IMR-90 (cell line): ENCODE measurements at regions of chr13 and their contacts with region 1.

Region 1: DNA sequence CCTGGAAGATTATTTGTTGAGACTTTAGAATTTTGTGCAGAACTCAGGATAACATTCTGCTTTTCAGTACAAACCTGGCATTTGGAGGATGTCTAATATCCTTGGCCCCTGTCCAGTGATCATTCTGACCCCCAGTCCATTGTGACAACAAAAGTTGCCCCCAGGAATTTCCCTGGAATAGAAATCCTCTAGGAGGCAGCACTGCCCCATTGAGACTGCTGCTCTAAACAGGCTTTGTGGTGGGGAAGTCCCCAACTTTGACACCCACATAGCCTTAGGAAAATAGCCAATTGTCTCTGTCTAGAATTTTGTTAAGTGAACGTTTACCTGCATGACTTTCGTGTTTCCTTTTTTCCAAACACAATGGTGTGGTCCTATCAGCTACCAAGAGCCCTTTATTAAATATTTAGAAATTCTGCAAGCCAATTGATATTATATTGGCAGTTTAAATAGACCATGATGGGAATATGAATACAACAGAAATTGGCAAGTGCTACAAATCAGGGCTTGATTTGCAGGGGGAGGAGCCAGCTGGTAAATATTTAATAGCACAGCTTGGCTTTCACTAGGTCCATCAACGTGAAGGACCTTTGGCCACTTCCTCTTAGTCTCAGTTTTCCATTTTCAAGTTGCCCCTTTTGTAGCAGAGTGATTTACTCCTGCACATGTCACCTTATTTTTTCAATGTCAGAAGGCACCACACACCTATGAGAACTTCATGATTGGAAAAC is 451.7 kb downstream of the EFNB2 start:
- DNase-seq: peak; percentile 54
- ATAC-seq: peak; percentile 64
- H3K4me3 ChIP-seq: no peak overlapping the region
- H3K27ac ChIP-seq: no peak overlapping the region
- H3K4me1 ChIP-seq: no peaks in the 10 kb centered on the region
- H3K27me3 ChIP-seq: no peaks in the 10 kb centered on the region
- CTCF ChIP-seq: peak; percentile 74
- POLR2A ChIP-seq: no peak
- RAD21 ChIP-seq: peak; percentile 88

Region 2: DNA sequence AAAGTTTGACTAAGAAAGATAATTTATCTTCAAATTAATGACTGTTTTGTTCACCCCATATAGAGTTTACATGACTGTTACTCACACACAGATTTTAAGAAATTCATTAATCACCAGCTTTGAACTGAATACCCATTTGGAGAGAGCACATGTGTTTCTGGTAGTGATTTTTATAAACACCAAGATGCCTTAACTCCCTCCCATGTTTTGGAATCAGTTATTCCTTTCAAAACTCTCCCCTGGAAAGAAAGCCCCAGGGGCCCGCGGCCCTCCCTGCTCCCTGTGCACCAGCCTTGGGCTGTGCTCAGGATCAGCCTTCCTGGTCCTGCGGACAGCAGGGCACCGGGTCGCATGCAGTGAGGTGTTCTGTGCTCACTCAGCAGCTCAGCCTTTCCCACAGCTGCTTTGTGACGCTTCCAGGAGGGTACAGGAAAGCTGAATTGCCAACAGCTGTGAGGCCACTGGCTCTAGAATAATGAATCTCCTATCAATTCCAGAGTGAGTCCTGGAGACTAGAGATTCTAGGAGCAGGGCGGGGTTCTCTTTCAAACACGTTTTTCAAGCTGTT is 31.5 kb before region 1 on chr13:
- CTCF ChIA-PET with region 1: no interaction called
- POLR2A ChIA-PET with region 1: no interaction called
- dilution Hi-C with region 1: no loop called
- in situ Hi-C with region 1: no loop called
- intact Hi-C with region 1: no loop called
- DNase-seq: peak; percentile 48
- ATAC-seq: peak; percentile 75
- H3K4me3 ChIP-seq: no peak overlapping the region
- H3K27ac ChIP-seq: no peak overlapping the region
- H3K4me1 ChIP-seq: no peaks in the 10 kb centered on the region
- H3K27me3 ChIP-seq: no peaks in the 10 kb centered on the region
- CTCF ChIP-seq: no peak
- POLR2A ChIP-seq: no peak
- RAD21 ChIP-seq: no peak

Region 3: GRCh38 chr13:106393781-106394180 is 310.0 kb after region 1 on chr13:
- CTCF ChIA-PET with region 1: no interaction called
- POLR2A ChIA-PET with region 1: no interaction called
- dilution Hi-C with region 1: no loop called
- in situ Hi-C with region 1: no loop called
- intact Hi-C with region 1: no loop called
- DNase-seq: peak; percentile 43
- ATAC-seq: peak; percentile 57; the same call in 1 of the 2 replicates
- H3K4me3 ChIP-seq: no peak overlapping the region
- H3K27ac ChIP-seq: no peak overlapping the region
- H3K4me1 ChIP-seq: no peaks in the 10 kb centered on the region
- H3K27me3 ChIP-seq: no peaks in the 10 kb centered on the region
- CTCF ChIP-seq: no peak
- POLR2A ChIP-seq: no peak
- RAD21 ChIP-seq: no peak

Region 4: GRCh38 chr13:106507560-106508274 is 423.9 kb after region 1 on chr13:
- CTCF ChIA-PET with region 1: no interaction called
- POLR2A ChIA-PET with region 1: no interaction called
- dilution Hi-C with region 1: no loop called
- in situ Hi-C with region 1: loop called (anchors 25 kb)
- intact Hi-C with region 1: no loop called
- DNase-seq: peak; percentile 95
- ATAC-seq: peak; percentile 85
- H3K4me3 ChIP-seq: peak overlapping the region; percentile 2; the same call in 1 of the 2 replicates
- H3K27ac ChIP-seq: peak overlapping the region; percentile 57; the same call in 1 of the 2 replicates
- H3K4me1 ChIP-seq: peaks cover 3% of the 10 kb centered on the region; the same call in 1 of the 2 replicates
- H3K27me3 ChIP-seq: no peaks in the 10 kb centered on the region
- CTCF ChIP-seq: no peak
- POLR2A ChIP-seq: no peak
- RAD21 ChIP-seq: peak; percentile 10; the same call in 1 of the 2 replicates

Region 5: DNA sequence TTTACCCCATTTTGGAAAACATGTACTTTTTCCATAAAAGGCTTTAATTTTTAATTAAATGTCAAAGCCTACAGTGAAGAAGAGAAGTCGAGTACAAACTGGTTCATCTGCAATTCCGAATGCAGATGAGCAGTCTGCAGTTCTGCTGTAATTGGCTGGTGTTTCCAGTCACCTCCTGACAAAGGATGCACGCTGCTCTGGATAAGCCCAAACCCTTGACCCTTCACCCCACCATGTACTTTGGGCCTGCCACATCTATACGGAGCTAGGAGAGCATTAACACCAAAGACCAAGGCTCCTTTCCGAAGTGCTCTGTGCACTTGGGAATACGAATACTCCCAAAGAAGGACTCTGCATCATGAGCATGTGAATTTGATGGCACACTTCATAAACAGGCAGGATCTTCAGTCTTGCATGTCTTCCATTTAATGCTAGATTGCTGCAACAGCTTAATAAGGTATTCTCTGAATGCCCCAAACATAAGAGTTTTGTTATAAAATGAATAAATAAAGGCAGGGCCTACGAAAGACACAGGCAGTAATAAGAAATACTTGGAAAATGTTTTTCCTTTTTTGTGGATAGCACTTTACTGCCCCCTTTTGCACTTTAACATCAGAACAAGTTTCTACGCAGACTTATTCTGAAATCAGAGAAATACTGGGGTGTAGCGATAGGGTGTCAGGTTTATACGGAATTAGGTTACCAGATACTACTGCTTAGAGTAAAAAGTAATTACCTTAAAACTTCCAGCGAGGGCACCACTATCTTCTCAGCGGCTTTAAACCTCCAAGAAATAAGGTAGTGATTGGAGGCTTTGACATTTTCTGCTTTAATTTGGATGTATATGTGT is 436.6 kb after region 1 on chr13:
- CTCF ChIA-PET with region 1: no interaction called
- POLR2A ChIA-PET with region 1: no interaction called
- dilution Hi-C with region 1: no loop called
- in situ Hi-C with region 1: loop called (anchors 25 kb)
- intact Hi-C with region 1: loop called (anchors 1 kb)
- DNase-seq: peak; percentile 56
- ATAC-seq: peak; percentile 75
- H3K4me3 ChIP-seq: no peak overlapping the region
- H3K27ac ChIP-seq: peak overlapping the region; percentile 22; the same call in 1 of the 2 replicates
- H3K4me1 ChIP-seq: peaks cover 6% of the 10 kb centered on the region
- H3K27me3 ChIP-seq: no peaks in the 10 kb centered on the region
- CTCF ChIP-seq: peak; percentile 73
- POLR2A ChIP-seq: no peak
- RAD21 ChIP-seq: peak; percentile 72